Adrenal gland (tissue), 19 donors: ENCODE measurements at regions of chr20 and their contacts with region 1.

Region 1: GRCh38 chr20:32674362-32674789 is 635 bp upstream of the C20orf203 start:
- DNase-seq: peak in 6 of 7 donors; percentile 38 to 69 (median 56)
- H3K4me3 ChIP-seq: no peak overlapping the region
- H3K27ac ChIP-seq: no peak overlapping the region
- H3K4me1 ChIP-seq: peaks cover 6 to 10% of the 10 kb centered on the region in 2 donors
- H3K27me3 ChIP-seq: no peaks in the 10 kb centered on the region
- CTCF ChIP-seq: peak; percentile 41 to 74 (median 68)
- POLR2A ChIP-seq: no peak

Region 2: GRCh38 chr20:32779500-32780211 is 105.3 kb after region 1 on chr20:
- intact Hi-C with region 1: loop called (anchors 2 to 5 kb)
- DNase-seq: no peak
- H3K4me3 ChIP-seq: no peak overlapping the region
- H3K27ac ChIP-seq: no peak overlapping the region
- H3K4me1 ChIP-seq: no peaks in the 10 kb centered on the region
- H3K27me3 ChIP-seq: no peaks in the 10 kb centered on the region
- CTCF ChIP-seq: no peak
- POLR2A ChIP-seq: no peak

Region 3: GRCh38 chr20:32894026-32894483 is 219.7 kb after region 1 on chr20:
- intact Hi-C with region 1: loop called in 1 of 2 experiments (anchors 10 kb)
- DNase-seq: peak in 3 of 7 donors; percentile 17 to 28 (median 26)
- H3K4me3 ChIP-seq: no peak overlapping the region
- H3K27ac ChIP-seq: no peak overlapping the region
- H3K4me1 ChIP-seq: no peaks in the 10 kb centered on the region
- H3K27me3 ChIP-seq: no peaks in the 10 kb centered on the region
- CTCF ChIP-seq: peak in 5 of 6 experiments; percentile 11 to 41 (median 30)
- POLR2A ChIP-seq: no peak